Activated CD4-positive, alpha-beta memory T cell treated with anti-CD3 and anti-CD28 coated beads, Interleukin-2, amount 10 ng/mL, durations not matched to agents 7 days and 5 days (primary cell): ENCODE measurements at regions of chr16 and their contacts with region 1.

Region 1: DNA sequence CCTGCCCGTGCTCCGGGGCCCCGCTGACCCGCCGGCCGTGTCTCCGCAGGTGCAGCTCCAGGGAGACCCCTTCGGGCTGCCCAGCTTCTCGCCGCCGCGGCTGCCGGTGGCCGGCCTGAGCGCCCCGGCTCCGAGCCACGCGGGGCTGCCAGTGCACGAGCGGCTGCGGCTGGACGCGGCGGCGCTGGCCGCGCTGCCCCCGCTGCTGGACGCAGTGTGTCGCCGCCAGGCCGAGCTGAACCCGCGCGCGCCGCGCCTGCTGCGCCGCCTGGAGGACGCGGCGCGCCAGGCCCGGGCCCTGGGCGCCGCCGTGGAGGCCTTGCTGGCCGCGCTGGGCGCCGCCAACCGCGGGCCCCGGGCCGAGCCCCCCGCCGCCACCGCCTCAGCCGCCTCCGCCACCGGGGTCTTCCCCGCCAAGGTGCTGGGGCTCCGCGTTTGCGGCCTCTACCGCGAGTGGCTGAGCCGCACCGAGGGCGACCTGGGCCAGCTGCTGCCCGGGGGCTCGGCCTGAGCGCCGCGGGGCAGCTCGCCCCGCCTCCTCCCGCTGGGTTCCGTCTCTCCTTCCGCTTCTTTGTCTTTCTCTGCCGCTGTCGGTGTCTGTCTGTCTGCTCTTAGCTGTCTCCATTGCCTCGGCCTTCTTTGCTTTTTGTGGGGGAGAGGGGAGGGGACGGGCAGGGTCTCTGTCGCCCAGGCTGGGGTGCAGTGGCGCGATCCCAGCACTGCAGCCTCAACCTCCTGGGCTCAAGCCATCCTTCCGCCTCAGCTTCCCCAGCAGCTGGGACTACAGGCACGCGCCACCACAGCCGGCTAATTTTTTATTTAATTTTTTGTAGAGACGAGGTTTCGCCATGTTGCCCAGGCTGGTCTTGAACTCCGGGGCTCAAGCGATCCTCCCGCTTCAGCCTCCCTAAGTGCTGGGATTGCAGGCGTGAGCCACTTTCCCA is 5.9 kb downstream of the CTF1 start:
- DNase-seq: peak; percentile 64
- H3K4me3 Mint-ChIP-seq: peak overlapping the region; percentile 91
- H3K27ac Mint-ChIP-seq: peak overlapping the region; percentile 94
- H3K4me1 Mint-ChIP-seq: peaks cover 44% of the 10 kb centered on the region
- H3K27me3 Mint-ChIP-seq: no peaks in the 10 kb centered on the region

Region 2: DNA sequence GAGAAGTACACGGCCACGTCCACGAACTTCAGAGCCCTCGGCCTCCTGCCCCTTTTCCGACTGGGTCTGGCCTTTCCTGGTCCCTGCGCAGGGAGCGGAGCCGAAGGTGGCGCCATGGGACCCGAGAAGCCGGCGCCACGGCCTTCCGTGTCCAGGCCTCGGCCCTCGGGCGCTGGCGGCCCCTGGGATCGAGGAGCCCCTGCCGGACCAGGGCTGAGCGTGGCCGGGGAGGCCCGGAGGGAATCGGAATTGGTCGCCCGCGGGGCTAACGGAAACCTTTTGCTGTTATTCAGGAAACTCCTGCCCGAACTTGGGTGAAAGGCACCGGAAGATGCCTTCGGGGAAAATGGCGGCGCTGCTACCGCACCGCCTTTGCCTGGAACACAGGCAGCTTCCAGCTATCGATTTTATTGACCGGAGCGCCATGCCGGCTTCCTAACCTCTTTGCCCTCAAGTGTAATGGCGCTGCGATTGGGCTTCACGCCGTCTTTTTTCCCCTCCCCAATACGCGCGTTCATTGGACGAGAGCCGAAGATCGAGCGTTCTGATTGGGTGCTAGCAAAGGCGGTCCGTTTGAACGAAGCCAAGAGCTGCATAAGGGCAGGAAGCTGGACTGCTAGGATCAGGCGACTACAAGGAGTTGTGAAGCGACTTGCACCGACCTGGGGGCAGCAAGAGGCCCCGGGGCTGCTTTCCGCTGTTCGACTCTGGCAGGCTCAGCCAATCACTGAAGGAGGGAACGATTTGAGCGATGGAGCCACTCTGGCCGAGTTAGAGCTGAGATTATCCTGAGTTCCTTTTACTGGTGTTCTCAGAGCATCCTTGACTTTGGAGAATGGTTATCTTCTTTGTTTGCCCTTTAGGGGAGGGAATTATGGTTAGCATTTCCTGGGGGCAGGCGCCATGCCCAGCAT is 292.1 kb before region 1 on chr16 and contains the start of gene ZNF689:
- CTCF ChIA-PET with region 1: no interaction called
- POLR2A ChIA-PET with region 1: no interaction called
- DNase-seq: peak; percentile 96
- H3K4me3 Mint-ChIP-seq: peak within 1 kb of the TSS; percentile 83
- H3K27ac Mint-ChIP-seq: peak within 1 kb of the TSS; percentile 90
- H3K4me1 Mint-ChIP-seq: peaks cover 29% of the 10 kb centered on the region
- H3K27me3 Mint-ChIP-seq: no peaks in the 10 kb centered on the region
- total RNA-seq, gene ZNF689: 9.9 to 11.7 TPM

Region 3: DNA sequence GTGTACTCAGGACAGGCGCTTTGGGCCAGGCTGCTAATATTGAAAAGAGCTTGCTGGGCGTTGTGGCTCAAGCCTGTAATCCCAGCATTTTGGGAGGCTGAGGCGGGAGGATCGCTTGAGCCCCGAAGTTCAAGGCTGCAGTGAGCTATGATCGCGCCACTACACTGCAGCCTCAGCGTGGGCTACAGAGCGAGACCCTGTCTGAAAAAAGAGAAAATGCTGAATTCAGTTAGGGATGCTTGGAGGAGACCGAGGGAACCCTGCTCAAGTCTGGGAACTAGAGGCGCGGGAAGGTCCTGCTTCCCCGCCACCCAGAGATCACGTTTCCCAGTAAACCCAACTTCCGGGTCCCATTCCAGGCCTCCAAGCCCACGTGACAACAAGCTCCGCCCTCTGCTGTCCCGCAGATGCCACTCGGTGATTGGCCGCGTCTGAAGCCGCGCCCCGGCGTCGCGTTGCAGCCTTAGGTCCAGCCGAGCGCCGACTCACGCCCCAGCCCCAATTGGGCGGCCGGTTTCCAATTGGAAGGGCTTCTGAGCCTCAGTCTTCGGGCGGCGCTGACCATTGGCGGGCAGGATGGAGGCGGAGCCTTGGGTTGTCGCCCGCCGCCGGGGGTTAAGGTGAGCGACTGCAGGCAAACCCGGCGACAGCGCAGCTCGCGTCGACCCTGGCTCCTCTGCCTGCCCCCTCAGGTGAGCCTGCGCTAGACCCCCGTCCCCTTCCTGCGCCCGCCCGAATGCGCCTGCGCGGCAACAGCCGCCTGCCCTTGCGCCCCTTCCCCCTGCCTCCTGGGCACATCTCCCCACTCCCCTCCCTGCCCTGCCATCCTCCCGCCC is 154.3 kb before region 1 on chr16 and contains the start of gene PHKG2:
- CTCF ChIA-PET with region 1: interaction called, 12 read pairs
- POLR2A ChIA-PET with region 1: interaction called, 11 read pairs
- DNase-seq: peak; percentile 99
- H3K4me3 Mint-ChIP-seq: peak within 1 kb of the TSS; percentile 93
- H3K27ac Mint-ChIP-seq: peak within 1 kb of the TSS; percentile 84
- H3K4me1 Mint-ChIP-seq: peaks cover 33% of the 10 kb centered on the region
- H3K27me3 Mint-ChIP-seq: no peaks in the 10 kb centered on the region
- total RNA-seq, gene PHKG2: 34.5 to 38.6 TPM

Region 4: GRCh38 chr16:30844671-30845449 is 57.4 kb before region 1 on chr16:
- CTCF ChIA-PET with region 1: interaction called, 96 read pairs
- POLR2A ChIA-PET with region 1: interaction called, 35 read pairs
- DNase-seq: peak; percentile 84
- H3K4me3 Mint-ChIP-seq: peak overlapping the region; percentile 46
- H3K27ac Mint-ChIP-seq: peak overlapping the region; percentile 53
- H3K4me1 Mint-ChIP-seq: peaks cover 10% of the 10 kb centered on the region
- H3K27me3 Mint-ChIP-seq: no peaks in the 10 kb centered on the region

Region 5: GRCh38 chr16:30874821-30875717 is 27.2 kb before region 1 on chr16:
- CTCF ChIA-PET with region 1: interaction called, 24 read pairs
- POLR2A ChIA-PET with region 1: interaction called, 75 read pairs
- DNase-seq: peak; percentile 90
- H3K4me3 Mint-ChIP-seq: peak overlapping the region; percentile 93
- H3K27ac Mint-ChIP-seq: peak overlapping the region; percentile 75
- H3K4me1 Mint-ChIP-seq: peaks cover 40% of the 10 kb centered on the region
- H3K27me3 Mint-ChIP-seq: no peaks in the 10 kb centered on the region

Region 6: GRCh38 chr16:30941600-30942425 is 39.5 kb after region 1 on chr16:
- CTCF ChIA-PET with region 1: interaction called, 10 read pairs
- POLR2A ChIA-PET with region 1: no interaction called
- DNase-seq: peak; percentile 81
- H3K4me3 Mint-ChIP-seq: peak overlapping the region; percentile 64
- H3K27ac Mint-ChIP-seq: peak overlapping the region; percentile 68
- H3K4me1 Mint-ChIP-seq: peaks cover 38% of the 10 kb centered on the region
- H3K27me3 Mint-ChIP-seq: no peaks in the 10 kb centered on the region

Region 7: GRCh38 chr16:31010585-31011325 is 108.5 kb after region 1 on chr16 and contains the start of gene STX1B:
- CTCF ChIA-PET with region 1: no interaction called
- POLR2A ChIA-PET with region 1: no interaction called
- DNase-seq: peak; percentile 31
- H3K4me3 Mint-ChIP-seq: peak within 1 kb of the TSS; percentile 14
- H3K27ac Mint-ChIP-seq: no peak within 1 kb of the TSS
- H3K4me1 Mint-ChIP-seq: peaks cover 4% of the 10 kb centered on the region
- H3K27me3 Mint-ChIP-seq: peaks cover 59% of the 10 kb centered on the region
- total RNA-seq, gene STX1B: 1.5 to 1.7 TPM

Region 8: GRCh38 chr16:31022544-31023251 is 120.4 kb after region 1 on chr16:
- CTCF ChIA-PET with region 1: no interaction called
- POLR2A ChIA-PET with region 1: no interaction called
- DNase-seq: no peak
- H3K4me3 Mint-ChIP-seq: no peak overlapping the region
- H3K27ac Mint-ChIP-seq: no peak overlapping the region
- H3K4me1 Mint-ChIP-seq: peaks cover 9% of the 10 kb centered on the region
- H3K27me3 Mint-ChIP-seq: no peaks in the 10 kb centered on the region

Region 9: DNA sequence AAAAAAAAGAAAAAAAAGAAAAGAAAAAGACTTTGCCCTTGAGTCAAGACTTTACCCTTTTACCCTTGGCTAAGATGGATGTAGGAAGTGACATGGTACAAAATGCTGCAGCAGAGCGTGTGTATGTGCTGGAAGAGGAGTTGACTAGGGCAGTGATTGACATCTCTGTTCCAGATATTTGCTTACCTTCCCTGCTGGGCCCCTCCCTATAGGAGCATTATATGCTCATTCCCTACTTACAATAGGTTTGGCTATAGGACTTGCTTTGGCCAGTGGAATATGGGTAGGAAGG is 141.8 kb after region 1 on chr16:
- CTCF ChIA-PET with region 1: no interaction called
- POLR2A ChIA-PET with region 1: no interaction called
- DNase-seq: no peak
- H3K4me3 Mint-ChIP-seq: no peak overlapping the region
- H3K27ac Mint-ChIP-seq: no peak overlapping the region
- H3K4me1 Mint-ChIP-seq: no peaks in the 10 kb centered on the region
- H3K27me3 Mint-ChIP-seq: no peaks in the 10 kb centered on the region